GM12878 (cell line): ENCODE measurements at regions of chr4 and their contacts with region 1.

Region 1: GRCh38 chr4:76949276-76950051 is at the start of gene SEPTIN11:
- DNase-seq: peak; percentile 55
- ATAC-seq: peak; percentile 86
- H3K4me3 ChIP-seq: peak within 1 kb of the TSS; percentile 95
- H3K27ac ChIP-seq: peak within 1 kb of the TSS; percentile 84
- H3K4me1 ChIP-seq: peaks cover 14% of the 10 kb centered on the region; the same call in 1 of the 2 replicates
- H3K27me3 ChIP-seq: no peaks in the 10 kb centered on the region
- CTCF ChIP-seq: no peak
- EP300 ChIP-seq: no peak
- POLR2A ChIP-seq: peak; percentile 97
- RAD21 ChIP-seq: no peak
- polyA plus RNA-seq, gene SEPTIN11: 24.7 to 27.1 TPM

Region 2: GRCh38 chr4:76781698-76782595 is 167.5 kb before region 1 on chr4:
- CTCF ChIA-PET with region 1: no interaction called
- POLR2A ChIA-PET with region 1: no interaction called
- RAD21 ChIA-PET with region 1: no interaction called
- SMC1A ChIA-PET with region 1: no interaction called
- in situ Hi-C with region 1: no loop called
- intact Hi-C with region 1: loop called (anchors 10 kb)
- DNase-seq: peak; percentile 76
- ATAC-seq: peak; percentile 66
- H3K4me3 ChIP-seq: no peak overlapping the region
- H3K27ac ChIP-seq: peak overlapping the region; percentile 76
- H3K4me1 ChIP-seq: peaks cover 16% of the 10 kb centered on the region
- H3K27me3 ChIP-seq: no peaks in the 10 kb centered on the region; a peak in 1 of 4 replicates
- CTCF ChIP-seq: no peak
- EP300 ChIP-seq: no peak
- POLR2A ChIP-seq: no peak
- RAD21 ChIP-seq: no peak

Region 3: GRCh38 chr4:76984127-76984526 is 34.7 kb after region 1 on chr4:
- CTCF ChIA-PET with region 1: interaction called, 6 read pairs
- POLR2A ChIA-PET with region 1: interaction called, 8 read pairs
- RAD21 ChIA-PET with region 1: interaction called, 5 read pairs
- SMC1A ChIA-PET with region 1: interaction called, 6 read pairs
- in situ Hi-C with region 1: no loop called
- intact Hi-C with region 1: loop called (anchors 2 kb)
- DNase-seq: peak; percentile 40
- ATAC-seq: peak; percentile 83
- H3K4me3 ChIP-seq: no peak overlapping the region
- H3K27ac ChIP-seq: peak overlapping the region; percentile 77
- H3K4me1 ChIP-seq: peaks cover 48% of the 10 kb centered on the region
- H3K27me3 ChIP-seq: no peaks in the 10 kb centered on the region
- CTCF ChIP-seq: peak; percentile 40 to 53 (median 40); a peak in 5 of 6 replicates
- EP300 ChIP-seq: no peak; a peak in 1 of 4 replicates
- POLR2A ChIP-seq: no peak
- RAD21 ChIP-seq: peak; percentile 60

Region 4: DNA sequence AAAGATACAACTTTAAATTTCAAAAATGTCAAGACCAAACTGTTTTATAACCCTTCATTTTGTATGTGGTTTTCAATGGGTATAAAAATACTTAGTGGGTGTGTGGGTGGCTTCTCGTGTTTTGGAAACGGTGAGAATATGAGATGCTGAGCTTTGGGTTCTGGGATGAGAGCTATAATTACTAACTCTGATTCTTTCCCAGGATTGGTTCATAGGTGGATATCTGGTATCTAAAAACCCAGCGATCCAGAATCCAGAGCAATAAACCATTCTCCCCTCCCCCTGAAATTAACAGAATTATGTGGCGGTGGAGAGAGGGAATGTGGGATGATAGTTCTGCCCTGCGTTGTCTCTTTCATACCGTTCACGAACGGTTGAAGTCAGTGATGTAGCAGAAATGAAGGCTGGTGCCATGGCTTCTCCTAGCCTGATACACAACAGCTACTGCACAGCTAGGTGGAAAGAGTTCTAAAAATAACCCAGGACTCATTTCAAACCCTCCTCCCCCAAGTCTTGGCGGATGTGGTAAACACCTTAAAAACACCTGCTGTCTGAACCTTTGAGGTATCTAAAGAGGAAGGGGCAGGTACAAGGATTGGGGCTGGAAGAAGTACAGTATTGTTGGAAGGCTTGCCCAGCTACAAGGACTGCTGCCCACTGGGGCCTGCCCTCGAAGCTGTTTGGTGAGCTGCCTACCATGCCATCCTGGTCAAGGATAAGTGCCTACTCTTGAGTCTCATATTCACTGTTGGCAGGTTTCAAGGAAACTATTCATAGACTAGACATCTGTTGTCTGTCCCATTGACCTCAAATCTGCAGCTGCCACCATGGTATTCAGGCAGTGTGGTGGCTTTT is 44.5 kb after region 1 on chr4:
- CTCF ChIA-PET with region 1: interaction called, 5 read pairs
- POLR2A ChIA-PET with region 1: interaction called, 9 read pairs
- RAD21 ChIA-PET with region 1: interaction called, 17 read pairs
- SMC1A ChIA-PET with region 1: interaction called, 22 read pairs
- in situ Hi-C with region 1: no loop called
- intact Hi-C with region 1: loop called (anchors 2 kb)
- DNase-seq: peak; percentile 73
- ATAC-seq: peak; percentile 89
- H3K4me3 ChIP-seq: peak overlapping the region; percentile 53
- H3K27ac ChIP-seq: peak overlapping the region; percentile 89
- H3K4me1 ChIP-seq: peaks cover 38% of the 10 kb centered on the region
- H3K27me3 ChIP-seq: no peaks in the 10 kb centered on the region
- CTCF ChIP-seq: no peak
- EP300 ChIP-seq: peak in 1 of 2 experiments; percentile 69; a peak in 3 of 4 replicates
- POLR2A ChIP-seq: peak; percentile 50
- RAD21 ChIP-seq: no peak; the same call in 1 of the 2 replicates

Region 5: DNA sequence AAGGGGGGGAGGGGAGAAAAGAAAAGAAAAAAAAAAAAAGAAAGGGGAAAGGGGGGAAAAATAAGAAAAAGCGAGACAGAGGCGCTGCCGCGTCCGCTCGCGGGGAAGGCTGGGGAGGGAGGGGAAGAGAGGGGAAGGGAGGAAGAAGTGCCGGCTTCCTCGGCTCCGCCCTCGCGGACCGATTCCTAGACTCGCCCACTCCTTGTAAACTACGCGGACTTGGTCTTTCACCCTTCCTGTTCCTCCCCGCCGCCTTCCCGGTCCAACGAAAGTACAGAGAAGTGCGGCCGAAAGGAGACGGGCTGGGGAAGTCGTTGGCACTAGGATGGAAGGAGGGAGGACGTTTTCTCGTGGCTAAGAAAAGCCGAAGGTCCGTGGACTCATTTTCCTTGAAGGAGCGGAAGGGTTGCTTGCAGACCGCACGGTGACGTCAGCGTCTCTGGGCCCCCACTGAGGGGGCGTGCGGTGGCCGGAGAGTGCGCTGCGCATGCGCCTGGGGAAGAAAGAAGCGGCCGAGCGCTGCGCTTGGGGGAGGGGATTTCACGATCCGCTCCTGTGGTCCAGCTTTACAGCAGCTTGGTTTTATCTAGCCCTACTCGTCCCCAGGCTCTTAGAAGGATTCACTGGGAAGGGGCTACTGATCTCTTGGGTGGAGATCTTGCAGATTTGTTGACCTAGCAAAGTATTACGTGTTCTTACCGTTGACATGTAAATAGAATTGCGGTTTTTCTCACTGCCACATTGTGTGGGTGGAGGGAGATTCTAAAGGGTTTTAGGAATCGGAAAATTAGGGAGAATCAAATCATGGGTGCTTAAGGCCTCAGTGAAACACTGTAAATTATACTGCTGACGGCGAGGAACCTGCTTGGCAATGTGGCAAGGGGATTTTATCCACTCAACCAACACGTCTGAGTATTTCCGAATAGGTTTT is 126.7 kb after region 1 on chr4 and contains the start of gene CCNI:
- CTCF ChIA-PET with region 1: interaction called, 4 read pairs
- POLR2A ChIA-PET with region 1: interaction called, 4 read pairs
- RAD21 ChIA-PET with region 1: interaction called, 8 read pairs
- SMC1A ChIA-PET with region 1: no interaction called
- in situ Hi-C with region 1: no loop called
- intact Hi-C with region 1: loop called (anchors 1 kb)
- DNase-seq: peak; percentile 92
- ATAC-seq: peak; percentile 77
- H3K4me3 ChIP-seq: peak within 1 kb of the TSS; percentile 97
- H3K27ac ChIP-seq: peak within 1 kb of the TSS; percentile 100
- H3K4me1 ChIP-seq: 0 out of 2 replicates have a peak, but pooled peaks cover 3% of the 10 kb centered on the region
- H3K27me3 ChIP-seq: no peaks in the 10 kb centered on the region
- CTCF ChIP-seq: no peak
- EP300 ChIP-seq: peak; percentile 4 to 78; a peak in 3 of 4 replicates
- POLR2A ChIP-seq: peak; percentile 82
- RAD21 ChIP-seq: no peak
- polyA plus RNA-seq, gene CCNI: 72.4 to 82.4 TPM

Region 6: GRCh38 chr4:77652237-77652897 is 702.9 kb after region 1 on chr4:
- CTCF ChIA-PET with region 1: no interaction called
- POLR2A ChIA-PET with region 1: no interaction called
- RAD21 ChIA-PET with region 1: no interaction called
- SMC1A ChIA-PET with region 1: no interaction called
- in situ Hi-C with region 1: no loop called
- intact Hi-C with region 1: no loop called
- DNase-seq: no peak
- ATAC-seq: no peak
- H3K4me3 ChIP-seq: no peak overlapping the region
- H3K27ac ChIP-seq: no peak overlapping the region
- H3K4me1 ChIP-seq: no peaks in the 10 kb centered on the region
- H3K27me3 ChIP-seq: no peaks in the 10 kb centered on the region; a peak in 1 of 4 replicates
- CTCF ChIP-seq: no peak
- EP300 ChIP-seq: no peak
- POLR2A ChIP-seq: no peak
- RAD21 ChIP-seq: no peak